ENCODE measurements at regions of chr2 and their contacts with region 1.

Region 1: DNA sequence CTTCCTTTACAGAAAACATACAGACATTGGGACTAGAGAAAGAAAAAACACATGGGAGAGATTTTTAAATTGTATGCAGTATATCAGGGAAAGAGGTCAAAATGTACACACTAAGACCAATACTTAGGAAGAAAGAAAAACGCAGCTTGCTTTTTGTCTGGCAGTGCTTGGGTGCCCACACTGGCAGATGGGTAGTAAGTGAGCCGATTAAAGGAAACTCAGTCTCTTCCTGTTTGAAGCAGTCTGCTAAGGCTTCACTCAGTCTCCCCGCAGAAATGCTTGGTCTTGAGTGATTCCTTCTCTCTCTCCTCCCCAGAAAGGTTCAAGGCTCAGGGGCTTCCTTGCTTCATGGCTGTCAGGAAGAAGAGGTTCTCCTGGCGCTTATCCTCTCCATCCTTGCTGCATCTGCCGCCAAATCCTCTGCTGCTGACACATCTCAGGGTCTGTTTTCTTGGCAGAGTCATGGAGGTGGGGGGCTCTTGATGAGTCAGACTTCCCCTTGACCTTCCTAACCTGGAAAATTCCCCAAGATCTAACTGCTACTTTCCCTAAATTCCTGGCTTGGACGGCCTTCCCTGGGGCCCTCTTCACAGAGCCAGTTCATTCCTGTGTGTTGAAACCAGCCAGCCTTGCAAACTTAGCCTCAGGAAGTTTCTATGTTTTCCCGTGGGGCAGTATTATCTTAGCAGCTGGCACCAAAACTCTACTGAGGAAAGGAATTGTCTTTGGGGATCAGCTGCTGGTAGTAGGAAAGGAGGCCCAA is 10.5 kb upstream of the TMSB10 start:
- DNase-seq: no peak
- ATAC-seq: peak in 1 of 2 experiments; percentile 14; a peak in 2 of 6 replicates
- H3K4me3 ChIP-seq: no peak overlapping the region
- H3K27ac ChIP-seq: peak overlapping the region in 1 of 2 experiments; percentile 38; a peak in 3 of 6 replicates
- H3K4me1 ChIP-seq: peaks cover 20% of the 10 kb centered on the region
- CTCF ChIP-seq: no peak
- EP300 ChIP-seq: no peak
- POLR2A ChIP-seq: no peak
- RAD21 ChIP-seq: no peak

Region 2: DNA sequence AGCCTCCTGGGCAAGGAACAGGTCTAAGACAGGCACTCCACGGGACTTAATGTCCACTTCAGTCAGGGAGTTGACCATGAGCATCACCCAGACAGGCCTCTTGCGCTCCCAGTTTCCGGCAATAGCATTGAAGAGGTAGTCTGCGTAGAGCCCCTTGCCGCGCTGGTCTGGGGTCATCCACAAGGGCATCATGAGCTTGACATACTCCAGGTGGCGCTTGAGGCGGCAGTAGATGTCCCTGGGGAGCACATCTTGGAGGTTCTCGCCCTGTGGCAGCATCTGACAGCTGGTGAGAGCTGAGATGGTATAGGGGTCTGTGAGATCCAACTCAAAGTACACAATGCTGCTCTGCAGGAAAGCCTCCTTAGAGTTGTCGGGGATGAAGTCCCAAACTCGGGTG is 24.6 kb before region 1 on chr2:
- CTCF ChIA-PET with region 1: no interaction called
- POLR2A ChIA-PET with region 1: no interaction called
- DNase-seq: no peak
- ATAC-seq: peak in 1 of 2 experiments; percentile 64; a peak in 3 of 6 replicates
- H3K4me3 ChIP-seq: no peak overlapping the region
- H3K27ac ChIP-seq: no peak overlapping the region
- H3K4me1 ChIP-seq: no peaks in the 10 kb centered on the region
- CTCF ChIP-seq: no peak
- EP300 ChIP-seq: no peak
- POLR2A ChIP-seq: no peak
- RAD21 ChIP-seq: 0 out of 5 replicates have a peak, but pooled peaks of 1 of the 2 experiments have one; percentile 6

Region 3: DNA sequence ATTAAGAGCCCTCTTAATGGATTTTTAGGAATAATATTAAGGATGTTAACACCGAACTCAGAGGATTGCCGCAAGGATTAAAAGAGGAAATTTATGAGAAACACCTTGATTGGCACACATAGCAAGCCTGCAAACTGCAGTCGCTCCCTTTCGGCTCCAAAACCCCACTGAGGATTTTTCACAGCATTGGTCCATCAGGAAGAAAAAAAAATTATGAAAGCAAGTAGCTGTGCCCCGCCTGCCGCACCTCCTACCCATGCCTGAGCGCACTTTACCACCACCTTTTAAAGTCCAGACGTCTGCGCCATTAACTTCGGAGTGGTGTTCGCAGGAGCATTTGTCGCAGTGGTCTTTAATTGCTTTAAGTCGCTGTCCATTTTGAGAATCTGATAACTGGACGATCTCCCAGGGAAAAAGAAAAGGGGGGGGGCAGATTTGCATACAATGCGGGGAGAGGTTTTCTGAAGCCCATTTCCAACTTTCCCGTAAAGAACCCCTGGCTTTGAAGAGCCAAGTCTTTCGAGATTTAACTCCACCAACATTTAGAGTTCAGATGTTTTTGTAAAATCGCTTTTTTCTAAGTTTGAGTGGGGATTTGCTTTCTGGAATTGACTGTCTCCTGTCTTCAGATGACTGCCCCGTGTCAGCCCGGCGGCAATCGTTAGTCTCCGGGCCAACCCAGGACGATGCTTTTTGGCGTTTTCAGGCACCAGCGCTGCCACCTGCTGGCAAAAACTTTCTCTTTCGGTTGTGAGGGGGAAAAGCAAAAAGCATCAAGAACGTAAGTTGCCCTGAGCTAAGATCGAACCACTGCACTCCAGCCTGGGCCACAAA is 13.1 kb before region 1 on chr2:
- CTCF ChIA-PET with region 1: interaction called, 14 read pairs
- POLR2A ChIA-PET with region 1: no interaction called
- DNase-seq: peak; percentile 86 to 88
- ATAC-seq: peak; percentile 71 to 88
- H3K4me3 ChIP-seq: peak overlapping the region; percentile 50
- H3K27ac ChIP-seq: peak overlapping the region; percentile 64 to 89; a peak in 5 of 6 replicates
- H3K4me1 ChIP-seq: peaks cover 3% of the 10 kb centered on the region
- CTCF ChIP-seq: peak; percentile 86
- EP300 ChIP-seq: no peak
- POLR2A ChIP-seq: no peak
- RAD21 ChIP-seq: peak; percentile 83 to 84

Region 4: GRCh38 chr2:85188852-85189587 is 294.1 kb after region 1 on chr2:
- CTCF ChIA-PET with region 1: no interaction called
- POLR2A ChIA-PET with region 1: no interaction called
- DNase-seq: no peak
- ATAC-seq: no peak; a peak in 2 of 6 replicates
- H3K4me3 ChIP-seq: no peak overlapping the region
- H3K27ac ChIP-seq: no peak overlapping the region
- H3K4me1 ChIP-seq: peaks cover 10% of the 10 kb centered on the region; the same call in 2 of the 3 replicates
- CTCF ChIP-seq: no peak
- EP300 ChIP-seq: no peak
- POLR2A ChIP-seq: no peak
- RAD21 ChIP-seq: no peak

Measured in A549 (cell line).